ENCODE measurements at regions of chr5 and their contacts with region 1.

Region 1: DNA sequence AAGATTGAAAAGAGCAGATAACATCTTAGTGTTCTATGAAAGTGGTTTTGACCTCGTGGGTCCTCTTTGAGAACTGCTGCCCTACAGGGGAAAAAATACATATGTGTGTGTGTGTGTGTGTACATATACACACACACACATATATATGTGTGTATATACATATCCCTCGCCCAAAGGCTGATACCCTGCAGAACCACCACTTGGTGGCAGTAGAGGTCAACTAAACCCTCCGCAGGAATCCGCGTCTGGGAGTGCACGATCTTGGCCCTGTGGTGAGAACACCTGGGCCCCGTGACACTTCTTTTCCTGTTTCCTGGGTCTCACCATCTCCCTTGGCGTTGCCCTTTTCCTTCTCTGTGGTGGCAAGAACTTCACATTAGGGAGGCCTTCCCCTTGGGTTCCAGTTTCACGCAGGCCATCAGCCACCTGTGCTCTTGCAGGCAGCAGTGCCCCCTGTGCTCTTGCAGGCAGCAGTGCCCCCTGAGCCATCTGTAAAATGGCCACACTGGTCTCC is 8.2 kb downstream of the IL9 start:
- DNase-seq: peak; percentile 67 to 77 (median 73)
- H3K4me3 ChIP-seq: peak overlapping the region in 1 of 7 experiments; percentile 12
- H3K27ac ChIP-seq: no peak overlapping the region
- H3K4me1 ChIP-seq: peaks cover 0 to 2% (median 0%) of the 10 kb centered on the region in 4 experiments
- H3K27me3 ChIP-seq: peaks cover 2 to 29% (median 15%) of the 10 kb centered on the region in 5 experiments

Region 2: GRCh38 chr5:136166909-136167308 is 279.5 kb after region 1 on chr5:
- CTCF ChIA-PET with region 1: no interaction called
- POLR2A ChIA-PET with region 1: no interaction called
- DNase-seq: peak in 2 of 3 donors; percentile 48 to 56
- H3K4me3 ChIP-seq: peak overlapping the region in 1 of 7 experiments; percentile 23
- H3K27ac ChIP-seq: no peak overlapping the region
- H3K4me1 ChIP-seq: peaks cover 2 to 7% (median 4%) of the 10 kb centered on the region in 4 experiments
- H3K27me3 ChIP-seq: no peaks in the 10 kb centered on the region

Region 3: DNA sequence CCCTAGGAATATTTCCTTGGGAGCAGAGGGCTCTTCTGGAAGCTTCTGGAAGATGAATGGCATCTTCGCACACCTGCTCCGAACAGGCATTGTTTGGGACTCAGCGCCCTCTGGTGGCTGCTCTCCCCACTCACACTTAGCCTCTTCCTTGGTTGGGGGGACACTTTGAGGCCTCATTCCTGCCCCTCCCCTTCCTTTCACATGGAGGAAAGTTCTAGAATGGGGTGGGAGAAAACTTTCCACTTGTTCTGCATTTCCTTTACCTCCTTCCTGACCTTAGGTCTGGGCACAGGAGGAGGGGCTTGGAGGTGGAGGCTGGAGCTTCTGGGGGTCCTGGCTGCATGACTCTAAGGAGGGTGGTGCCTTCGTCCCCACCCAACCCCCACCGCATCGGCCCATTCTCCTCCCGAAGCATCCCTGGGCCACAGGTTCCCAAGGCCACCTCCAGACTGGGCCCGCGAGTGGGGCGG is 324.9 kb after region 1 on chr5:
- CTCF ChIA-PET with region 1: interaction called, 11 read pairs
- POLR2A ChIA-PET with region 1: no interaction called
- DNase-seq: peak; percentile 14 to 60 (median 46)
- H3K4me3 ChIP-seq: no peak overlapping the region
- H3K27ac ChIP-seq: no peak overlapping the region
- H3K4me1 ChIP-seq: peaks cover 0 to 7% (median 3%) of the 10 kb centered on the region in 4 experiments
- H3K27me3 ChIP-seq: peaks cover 0 to 29% (median 3%) of the 10 kb centered on the region in 5 experiments

Measured in common myeloid progenitor, CD34-positive (primary cell).